OCI-LY7 (cell line): ENCODE measurements at regions of chr12 and their contacts with region 1.

Region 1: GRCh38 chr12:94875525-94875924 is 128.0 kb downstream of the NDUFA12 start:
- DNase-seq: peak; percentile 87
- H3K4me3 ChIP-seq: no peak overlapping the region
- H3K27ac ChIP-seq: no peak overlapping the region
- H3K4me1 ChIP-seq: peaks cover 38% of the 10 kb centered on the region
- CTCF ChIP-seq: peak; percentile 86

Region 2: GRCh38 chr12:94532490-94533422 is 342.8 kb before region 1 on chr12:
- CTCF ChIA-PET with region 1: no interaction called
- POLR2A ChIA-PET with region 1: no interaction called
- intact Hi-C with region 1: loop called (anchors 2 kb)
- DNase-seq: peak; percentile 77
- H3K4me3 ChIP-seq: no peak overlapping the region
- H3K27ac ChIP-seq: no peak overlapping the region
- H3K4me1 ChIP-seq: no peaks in the 10 kb centered on the region
- CTCF ChIP-seq: peak; percentile 91

Region 3: DNA sequence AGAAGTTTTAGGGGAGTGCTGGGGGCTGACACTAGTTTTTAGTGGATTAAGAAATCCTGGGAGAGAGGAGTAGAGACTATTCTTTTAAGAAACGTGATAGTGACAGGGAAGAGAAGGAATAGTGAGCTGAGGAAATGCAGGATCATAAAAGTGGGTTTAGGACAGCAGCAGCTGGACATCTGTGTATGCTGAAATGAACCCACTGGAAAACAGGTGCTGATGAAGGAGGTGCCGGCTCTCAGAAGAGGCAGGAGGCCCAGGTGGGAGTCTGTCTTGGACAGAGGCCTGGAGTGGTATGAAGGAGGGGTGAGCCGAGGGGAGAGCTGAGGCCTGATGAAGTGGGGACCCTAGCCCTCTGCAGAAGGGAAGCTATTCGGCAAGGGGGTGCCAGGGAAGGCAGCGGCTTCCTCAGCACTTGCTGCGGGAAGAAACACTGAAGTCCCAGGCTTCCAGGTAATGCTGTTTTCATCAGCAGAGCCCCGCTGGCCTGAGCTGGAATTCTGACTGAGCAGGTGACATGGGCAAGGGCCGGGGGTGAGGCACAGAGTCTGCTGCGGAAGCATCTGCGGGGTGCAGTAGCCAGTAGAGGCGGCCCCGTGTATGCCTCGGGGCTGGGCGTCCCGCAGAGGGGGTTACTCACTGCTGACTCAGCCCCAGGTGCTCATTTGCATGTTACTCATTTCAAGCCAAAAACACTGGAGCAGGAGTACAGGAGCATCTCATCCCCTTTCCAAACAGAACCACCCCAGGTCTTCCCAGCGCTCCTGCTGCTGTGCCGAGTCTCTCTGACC is 314.9 kb before region 1 on chr12:
- CTCF ChIA-PET with region 1: interaction called, 3 read pairs
- POLR2A ChIA-PET with region 1: no interaction called
- intact Hi-C with region 1: loop called (anchors 5 kb)
- DNase-seq: peak; percentile 62
- H3K4me3 ChIP-seq: peak overlapping the region; percentile 26
- H3K27ac ChIP-seq: no peak overlapping the region
- H3K4me1 ChIP-seq: peaks cover 21% of the 10 kb centered on the region
- CTCF ChIP-seq: no peak

Region 4: DNA sequence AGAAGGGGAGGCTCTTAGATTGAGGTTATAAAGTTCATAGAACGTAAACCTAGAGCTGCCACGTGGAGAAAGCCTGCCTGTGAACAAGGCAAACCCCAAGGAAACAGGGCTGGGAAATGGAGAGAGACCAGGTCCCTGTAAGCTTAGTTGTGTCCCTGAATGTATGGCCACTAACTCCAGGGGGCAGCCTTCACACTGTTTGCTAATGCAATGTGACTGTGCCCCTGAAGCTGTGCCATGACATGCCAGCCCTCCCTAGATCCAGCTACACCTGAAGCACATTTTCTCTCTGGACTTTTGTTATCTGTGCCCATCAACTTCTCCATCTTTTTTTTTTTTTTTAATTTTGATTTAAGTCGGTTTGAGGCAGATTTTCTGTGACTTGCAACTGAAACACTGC is 164.6 kb before region 1 on chr12:
- CTCF ChIA-PET with region 1: interaction called, 9 read pairs
- POLR2A ChIA-PET with region 1: interaction called, 9 read pairs
- intact Hi-C with region 1: loop called (anchors 1 kb)
- DNase-seq: peak; percentile 75
- H3K4me3 ChIP-seq: no peak overlapping the region
- H3K27ac ChIP-seq: no peak overlapping the region
- H3K4me1 ChIP-seq: peaks cover 8% of the 10 kb centered on the region
- CTCF ChIP-seq: peak; percentile 84

Region 5: GRCh38 chr12:94769047-94769420 is 106.5 kb before region 1 on chr12:
- CTCF ChIA-PET with region 1: no interaction called
- POLR2A ChIA-PET with region 1: interaction called, 16 read pairs
- intact Hi-C with region 1: loop called (anchors 1 kb)
- DNase-seq: peak; percentile 90
- H3K4me3 ChIP-seq: peak overlapping the region; percentile 63
- H3K27ac ChIP-seq: peak overlapping the region; percentile 97
- H3K4me1 ChIP-seq: peaks cover 61% of the 10 kb centered on the region
- CTCF ChIP-seq: no peak

Region 6: DNA sequence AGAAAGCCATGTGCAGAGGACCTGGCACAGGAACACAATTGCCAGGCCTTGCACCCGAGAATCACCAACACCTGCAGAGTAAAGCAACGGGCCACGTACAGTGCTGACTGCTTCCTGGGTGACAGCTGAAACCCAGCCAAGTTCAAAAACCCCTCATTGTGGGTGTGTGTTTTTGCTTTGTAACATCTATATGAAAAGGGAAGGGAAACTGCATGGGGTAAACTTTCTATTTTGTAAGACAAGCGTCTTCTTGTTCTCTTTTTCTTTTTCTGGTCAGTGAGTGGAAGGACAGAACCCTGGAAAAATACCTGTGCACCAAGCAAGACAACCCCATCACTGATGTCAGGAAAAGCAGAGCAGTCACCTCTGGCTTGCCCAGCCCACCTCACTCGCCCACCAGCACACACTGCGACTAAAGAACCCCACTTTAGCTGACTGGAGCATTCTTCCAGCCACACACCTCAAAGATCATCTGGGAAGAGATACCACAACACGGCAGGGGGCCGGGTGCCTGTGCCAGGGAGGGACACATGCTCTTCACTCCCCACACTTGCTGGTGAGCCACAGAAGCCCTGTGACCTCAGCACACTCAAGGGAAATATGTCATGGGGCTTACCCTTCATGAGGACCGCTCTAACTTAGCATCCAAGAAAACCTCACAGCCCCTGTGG is 44.3 kb before region 1 on chr12:
- CTCF ChIA-PET with region 1: no interaction called
- POLR2A ChIA-PET with region 1: interaction called, 18 read pairs
- intact Hi-C with region 1: loop called (anchors 1 kb)
- DNase-seq: peak; percentile 97
- H3K4me3 ChIP-seq: peak overlapping the region; percentile 48
- H3K27ac ChIP-seq: peak overlapping the region; percentile 97
- H3K4me1 ChIP-seq: peaks cover 49% of the 10 kb centered on the region
- CTCF ChIP-seq: no peak

Region 7: DNA sequence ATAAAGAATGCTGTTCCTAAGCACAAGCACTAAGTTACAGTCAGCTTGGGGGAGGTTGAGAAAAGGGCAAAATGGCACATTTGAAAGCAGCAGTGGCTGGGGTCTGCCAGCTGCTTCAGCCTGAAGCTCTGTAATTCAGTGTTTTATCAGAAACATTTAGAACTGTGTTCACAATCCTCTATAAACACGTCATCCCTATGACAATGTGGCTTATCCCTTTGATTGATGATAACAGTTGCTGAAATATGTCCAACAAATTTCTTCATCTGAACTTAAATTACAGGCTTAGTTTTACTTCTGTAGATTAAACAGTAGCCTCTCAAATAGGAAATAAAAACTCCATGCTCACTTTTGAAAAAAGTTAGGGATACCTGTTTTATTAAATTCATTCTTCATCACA is 450.9 kb after region 1 on chr12:
- CTCF ChIA-PET with region 1: no interaction called
- POLR2A ChIA-PET with region 1: no interaction called
- intact Hi-C with region 1: no loop called
- DNase-seq: no peak
- H3K4me3 ChIP-seq: no peak overlapping the region
- H3K27ac ChIP-seq: no peak overlapping the region
- H3K4me1 ChIP-seq: peaks cover 5% of the 10 kb centered on the region
- CTCF ChIP-seq: no peak